MCF 10A (cell line): ENCODE measurements at regions of chr10 and their contacts with region 1.

Region 1: GRCh38 chr10:99732033-99732912 is at the starts of genes COX15 and CUTC:
- DNase-seq: peak; percentile 95
- H3K4me3 Mint-ChIP-seq: peak within 1 kb of the TSS; percentile 88
- H3K27ac Mint-ChIP-seq: peak within 1 kb of the TSS; percentile 93
- H3K4me1 Mint-ChIP-seq: peaks cover 29% of the 10 kb centered on the region
- H3K27me3 Mint-ChIP-seq: no peaks in the 10 kb centered on the region
- CTCF ChIP-seq: peak; percentile 42
- total RNA-seq, gene COX15: 50.7 and 55.3 TPM in 2 replicates
- total RNA-seq, gene CUTC: 11.9 and 15.0 TPM in 2 replicates

Region 2: GRCh38 chr10:99620713-99621453 is 111.4 kb before region 1 on chr10:
- CTCF ChIA-PET with region 1: no interaction called
- POLR2A ChIA-PET with region 1: interaction called, 51 read pairs
- intact Hi-C with region 1: no loop called
- DNase-seq: peak; percentile 95
- H3K4me3 Mint-ChIP-seq: peak overlapping the region; percentile 78
- H3K27ac Mint-ChIP-seq: peak overlapping the region; percentile 98
- H3K4me1 Mint-ChIP-seq: peaks cover 32% of the 10 kb centered on the region
- H3K27me3 Mint-ChIP-seq: no peaks in the 10 kb centered on the region
- CTCF ChIP-seq: no peak

Region 3: GRCh38 chr10:99685597-99685967 is 46.7 kb before region 1 on chr10:
- CTCF ChIA-PET with region 1: interaction called, 3 read pairs
- POLR2A ChIA-PET with region 1: interaction called, 10 read pairs
- intact Hi-C with region 1: no loop called
- DNase-seq: peak; percentile 11
- H3K4me3 Mint-ChIP-seq: no peak overlapping the region
- H3K27ac Mint-ChIP-seq: peak overlapping the region; percentile 88
- H3K4me1 Mint-ChIP-seq: peaks cover 27% of the 10 kb centered on the region
- H3K27me3 Mint-ChIP-seq: no peaks in the 10 kb centered on the region
- CTCF ChIP-seq: no peak

Region 4: GRCh38 chr10:99742701-99743100 is 10.4 kb after region 1 on chr10:
- CTCF ChIA-PET with region 1: interaction called, 3 read pairs
- POLR2A ChIA-PET with region 1: interaction called, 47 read pairs
- intact Hi-C with region 1: no loop called
- DNase-seq: peak; percentile 14
- H3K4me3 Mint-ChIP-seq: no peak overlapping the region
- H3K27ac Mint-ChIP-seq: peak overlapping the region; percentile 70
- H3K4me1 Mint-ChIP-seq: peaks cover 15% of the 10 kb centered on the region
- H3K27me3 Mint-ChIP-seq: no peaks in the 10 kb centered on the region
- CTCF ChIP-seq: no peak

Region 5: GRCh38 chr10:99779335-99779734 is 47.1 kb after region 1 on chr10:
- CTCF ChIA-PET with region 1: interaction called, 6 read pairs
- POLR2A ChIA-PET with region 1: interaction called, 129 read pairs
- intact Hi-C with region 1: loop called (anchors 1 kb)
- DNase-seq: peak; percentile 82
- H3K4me3 Mint-ChIP-seq: peak overlapping the region; percentile 70
- H3K27ac Mint-ChIP-seq: peak overlapping the region; percentile 93
- H3K4me1 Mint-ChIP-seq: peaks cover 58% of the 10 kb centered on the region
- H3K27me3 Mint-ChIP-seq: no peaks in the 10 kb centered on the region
- CTCF ChIP-seq: no peak

Region 6: GRCh38 chr10:99834410-99834809 is 102.1 kb after region 1 on chr10:
- CTCF ChIA-PET with region 1: no interaction called
- POLR2A ChIA-PET with region 1: no interaction called
- intact Hi-C with region 1: loop called (anchors 5 kb)
- DNase-seq: peak; percentile 60
- H3K4me3 Mint-ChIP-seq: no peak overlapping the region
- H3K27ac Mint-ChIP-seq: no peak overlapping the region
- H3K4me1 Mint-ChIP-seq: peaks cover 7% of the 10 kb centered on the region
- H3K27me3 Mint-ChIP-seq: no peaks in the 10 kb centered on the region
- CTCF ChIP-seq: no peak